ENCODE measurements at regions of chr11 and their contacts with region 1.

Region 1: GRCh38 chr11:60265373-60266214 is 14.9 kb upstream of the MS4A4A start:
- DNase-seq: peak; percentile 27
- H3K4me3 Mint-ChIP-seq: no peak overlapping the region
- H3K27ac Mint-ChIP-seq: no peak overlapping the region
- H3K4me1 Mint-ChIP-seq: no peaks in the 10 kb centered on the region
- H3K27me3 Mint-ChIP-seq: peaks cover 8% of the 10 kb centered on the region

Region 2: DNA sequence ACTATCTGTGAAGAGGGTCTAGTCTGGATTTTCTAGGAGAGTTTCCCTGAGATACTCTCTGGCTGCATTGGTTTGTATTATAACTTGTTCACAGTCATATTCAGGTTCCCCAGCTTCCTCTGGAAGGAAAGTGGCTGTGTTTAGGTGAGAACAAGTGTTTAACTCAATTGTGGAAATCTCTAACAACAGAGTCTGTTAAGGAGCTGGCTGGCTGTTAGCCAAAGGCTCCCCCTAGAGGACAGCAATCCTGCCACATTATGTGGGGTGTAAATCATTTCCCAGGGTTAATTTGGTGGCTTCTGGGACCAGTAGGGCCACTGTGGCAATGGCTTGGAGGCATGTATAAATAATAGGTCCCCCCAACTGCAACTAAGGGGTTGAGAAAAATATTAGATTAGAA is 79.9 kb after region 1 on chr11:
- CTCF ChIA-PET with region 1: interaction called, 13 read pairs
- intact Hi-C with region 1: loop called (anchors 1 kb)
- DNase-seq: peak; percentile 41
- H3K4me3 Mint-ChIP-seq: no peak overlapping the region
- H3K27ac Mint-ChIP-seq: no peak overlapping the region
- H3K4me1 Mint-ChIP-seq: no peaks in the 10 kb centered on the region
- H3K27me3 Mint-ChIP-seq: peaks cover 21% of the 10 kb centered on the region

Region 3: GRCh38 chr11:60485986-60486385 is 220.4 kb after region 1 on chr11:
- CTCF ChIA-PET with region 1: interaction called, 3 read pairs
- intact Hi-C with region 1: loop called (anchors 2 kb)
- DNase-seq: peak; percentile 38
- H3K4me3 Mint-ChIP-seq: no peak overlapping the region
- H3K27ac Mint-ChIP-seq: no peak overlapping the region
- H3K4me1 Mint-ChIP-seq: peaks cover 4% of the 10 kb centered on the region
- H3K27me3 Mint-ChIP-seq: no peaks in the 10 kb centered on the region

Region 4: GRCh38 chr11:60615497-60615896 is 349.9 kb after region 1 on chr11:
- CTCF ChIA-PET with region 1: interaction called, 8 read pairs
- intact Hi-C with region 1: loop called (anchors 1 kb)
- DNase-seq: no peak
- H3K4me3 Mint-ChIP-seq: no peak overlapping the region
- H3K27ac Mint-ChIP-seq: no peak overlapping the region
- H3K4me1 Mint-ChIP-seq: no peaks in the 10 kb centered on the region
- H3K27me3 Mint-ChIP-seq: peaks cover 18% of the 10 kb centered on the region

Region 5: GRCh38 chr11:60756307-60757032 is 490.9 kb after region 1 on chr11 and contains the start of gene MS4A15:
- CTCF ChIA-PET with region 1: no interaction called
- intact Hi-C with region 1: loop called (anchors 2 kb)
- DNase-seq: peak; percentile 9
- H3K4me3 Mint-ChIP-seq: no peak within 1 kb of the TSS
- H3K27ac Mint-ChIP-seq: no peak within 1 kb of the TSS
- H3K4me1 Mint-ChIP-seq: no peaks in the 10 kb centered on the region
- H3K27me3 Mint-ChIP-seq: peaks cover 24% of the 10 kb centered on the region
- total RNA-seq, gene MS4A15: not detected

Measured in activated naive CD4-positive, alpha-beta T cell treated with anti-CD3 and anti-CD28 coated beads for 36 hours (primary cell).